ENCODE measurements at regions of chr5 and their contacts with region 1.

Region 1: DNA sequence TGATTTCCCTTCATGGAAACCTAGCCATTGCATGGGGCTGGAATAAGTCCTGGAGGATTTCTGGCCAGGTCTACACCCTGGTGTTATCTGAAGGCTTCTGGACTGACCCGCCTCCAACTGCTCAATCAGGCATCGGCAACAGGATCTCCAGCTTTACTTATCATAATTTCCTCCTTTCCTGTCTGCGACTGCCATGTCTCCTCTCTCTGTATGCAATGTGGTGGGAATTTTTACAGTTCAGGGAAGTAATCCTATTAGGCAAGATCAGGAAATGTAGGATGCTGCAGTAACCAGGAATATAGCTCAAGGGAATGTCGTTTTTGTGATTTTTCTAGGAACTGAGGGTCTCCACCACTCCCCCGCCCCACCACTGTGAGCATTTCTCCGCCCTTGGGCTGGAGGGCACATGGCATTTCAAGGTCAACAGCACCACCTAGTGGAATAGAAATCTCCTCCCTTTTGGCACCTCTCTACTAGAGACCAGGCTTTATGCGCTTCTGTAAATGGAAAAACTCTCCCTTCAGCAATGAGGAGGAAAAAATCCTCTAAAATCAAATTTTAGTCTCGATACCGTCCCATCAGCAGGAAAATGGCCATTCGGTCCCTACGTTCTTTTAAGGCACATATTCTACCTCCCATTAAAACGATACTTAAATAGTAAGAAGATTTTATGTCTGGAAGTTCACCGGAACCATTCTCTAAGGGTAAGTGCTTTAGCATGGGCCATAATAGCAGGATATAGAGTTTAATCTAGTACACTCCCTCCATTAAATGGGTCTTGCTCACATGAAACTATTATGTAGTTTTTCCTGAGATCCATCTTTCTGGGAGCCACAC is 93.0 kb downstream of the YTHDC2 start:
- DNase-seq: peak; percentile 30 to 57 (median 49)
- H3K4me3 ChIP-seq: no peak overlapping the region
- H3K4me3 Mint-ChIP-seq: no peak overlapping the region
- H3K27ac ChIP-seq: no peak overlapping the region
- H3K27ac Mint-ChIP-seq: no peak overlapping the region
- H3K4me1 ChIP-seq: no peaks in the 10 kb centered on the region
- H3K4me1 Mint-ChIP-seq: peaks cover 15% of the 10 kb centered on the region
- H3K27me3 ChIP-seq: peaks cover 23 to 26% of the 10 kb centered on the region in 2 donors
- H3K27me3 Mint-ChIP-seq: peaks cover 12 to 34% (median 19%) of the 10 kb centered on the region in 3 donors
- CTCF ChIP-seq: peak; percentile 82

Region 2: GRCh38 chr5:112983363-112983762 is 623.2 kb before region 1 on chr5:
- intact Hi-C with region 1: no loop called
- DNase-seq: no peak
- H3K4me3 ChIP-seq: no peak overlapping the region
- H3K4me3 Mint-ChIP-seq: no peak overlapping the region
- H3K27ac ChIP-seq: peak overlapping the region in 1 of 2 donors; percentile 54
- H3K27ac Mint-ChIP-seq: peak overlapping the region in 4 of 7 donors; percentile 6 to 44 (median 9)
- H3K4me1 ChIP-seq: peaks cover 7 to 25% of the 10 kb centered on the region in 2 donors
- H3K4me1 Mint-ChIP-seq: peaks cover 47% of the 10 kb centered on the region
- H3K27me3 ChIP-seq: no peaks in the 10 kb centered on the region
- H3K27me3 Mint-ChIP-seq: no peaks in the 10 kb centered on the region
- CTCF ChIP-seq: no peak

Region 3: GRCh38 chr5:112995764-112996618 is 610.5 kb before region 1 on chr5:
- intact Hi-C with region 1: loop called in 1 of 2 experiments (anchors 5 kb)
- DNase-seq: peak; percentile 39 to 60 (median 52)
- H3K4me3 ChIP-seq: no peak overlapping the region
- H3K4me3 Mint-ChIP-seq: no peak overlapping the region
- H3K27ac ChIP-seq: no peak overlapping the region
- H3K27ac Mint-ChIP-seq: peak overlapping the region in 2 of 7 donors; percentile 3 to 13
- H3K4me1 ChIP-seq: no peaks in the 10 kb centered on the region
- H3K4me1 Mint-ChIP-seq: peaks cover 4% of the 10 kb centered on the region
- H3K27me3 ChIP-seq: no peaks in the 10 kb centered on the region
- H3K27me3 Mint-ChIP-seq: no peaks in the 10 kb centered on the region
- CTCF ChIP-seq: peak; percentile 92

Region 4: DNA sequence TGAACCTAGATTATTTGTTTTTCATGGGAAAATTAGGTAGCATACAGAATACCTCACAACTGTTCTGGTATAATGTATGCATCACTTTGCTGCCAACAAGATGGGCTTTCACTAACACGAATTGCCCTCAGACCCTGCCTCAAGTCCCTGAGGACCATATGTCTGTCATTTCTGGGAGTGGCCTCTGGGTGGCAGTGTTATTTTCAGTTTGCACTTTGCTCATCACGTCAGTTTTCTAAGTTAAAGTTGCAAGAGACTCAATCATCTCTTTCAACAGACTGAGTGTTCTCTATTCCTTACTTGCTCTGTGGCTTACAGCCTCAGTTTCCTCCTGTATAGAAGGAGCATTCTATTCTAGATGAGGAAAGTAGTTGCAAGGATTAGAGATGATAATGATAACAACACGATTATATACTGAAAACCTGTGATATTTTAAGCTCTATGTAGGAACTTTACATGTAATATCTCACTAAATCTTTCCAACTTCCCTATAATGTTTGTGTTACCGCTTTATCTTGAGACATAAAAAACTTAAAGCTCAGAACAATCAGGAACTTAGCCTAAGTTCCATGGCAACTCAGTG is 227.5 kb before region 1 on chr5:
- intact Hi-C with region 1: loop called (anchors 5 to 10 kb)
- DNase-seq: peak; percentile 18 to 45 (median 41)
- H3K4me3 ChIP-seq: no peak overlapping the region
- H3K4me3 Mint-ChIP-seq: no peak overlapping the region
- H3K27ac ChIP-seq: no peak overlapping the region
- H3K27ac Mint-ChIP-seq: no peak overlapping the region
- H3K4me1 ChIP-seq: peaks cover 13 to 20% of the 10 kb centered on the region in 2 donors
- H3K4me1 Mint-ChIP-seq: peaks cover 14% of the 10 kb centered on the region
- H3K27me3 ChIP-seq: peaks cover 61 to 75% of the 10 kb centered on the region in 2 donors
- H3K27me3 Mint-ChIP-seq: peaks cover 41 to 60% (median 46%) of the 10 kb centered on the region in 3 donors
- CTCF ChIP-seq: peak; percentile 84